Activated CD4-positive, alpha-beta T cell treated with anti-CD3 and anti-CD28 coated beads, Interleukin-2, amount 10 ng/mL, durations not matched to agents 7 days and 5 days (primary cell): ENCODE measurements at regions of chr19 and their contacts with region 1.

Region 1: GRCh38 chr19:1445185-1445931 is 4.6 kb upstream of the APC2 start:
- DNase-seq: peak; percentile 76
- H3K4me3 Mint-ChIP-seq: peak overlapping the region; percentile 65
- H3K27ac Mint-ChIP-seq: peak overlapping the region; percentile 62
- H3K4me1 Mint-ChIP-seq: peaks cover 37% of the 10 kb centered on the region
- H3K27me3 Mint-ChIP-seq: peaks cover 26% of the 10 kb centered on the region

Region 2: GRCh38 chr19:1223018-1223855 is 222.1 kb before region 1 on chr19:
- CTCF ChIA-PET with region 1: no interaction called
- POLR2A ChIA-PET with region 1: no interaction called
- DNase-seq: peak; percentile 41
- H3K4me3 Mint-ChIP-seq: no peak overlapping the region
- H3K27ac Mint-ChIP-seq: no peak overlapping the region
- H3K4me1 Mint-ChIP-seq: no peaks in the 10 kb centered on the region
- H3K27me3 Mint-ChIP-seq: no peaks in the 10 kb centered on the region

Region 3: GRCh38 chr19:1373534-1374249 is 71.7 kb before region 1 on chr19:
- CTCF ChIA-PET with region 1: no interaction called
- POLR2A ChIA-PET with region 1: no interaction called
- DNase-seq: no peak
- H3K4me3 Mint-ChIP-seq: no peak overlapping the region
- H3K27ac Mint-ChIP-seq: no peak overlapping the region
- H3K4me1 Mint-ChIP-seq: no peaks in the 10 kb centered on the region
- H3K27me3 Mint-ChIP-seq: no peaks in the 10 kb centered on the region

Region 4: DNA sequence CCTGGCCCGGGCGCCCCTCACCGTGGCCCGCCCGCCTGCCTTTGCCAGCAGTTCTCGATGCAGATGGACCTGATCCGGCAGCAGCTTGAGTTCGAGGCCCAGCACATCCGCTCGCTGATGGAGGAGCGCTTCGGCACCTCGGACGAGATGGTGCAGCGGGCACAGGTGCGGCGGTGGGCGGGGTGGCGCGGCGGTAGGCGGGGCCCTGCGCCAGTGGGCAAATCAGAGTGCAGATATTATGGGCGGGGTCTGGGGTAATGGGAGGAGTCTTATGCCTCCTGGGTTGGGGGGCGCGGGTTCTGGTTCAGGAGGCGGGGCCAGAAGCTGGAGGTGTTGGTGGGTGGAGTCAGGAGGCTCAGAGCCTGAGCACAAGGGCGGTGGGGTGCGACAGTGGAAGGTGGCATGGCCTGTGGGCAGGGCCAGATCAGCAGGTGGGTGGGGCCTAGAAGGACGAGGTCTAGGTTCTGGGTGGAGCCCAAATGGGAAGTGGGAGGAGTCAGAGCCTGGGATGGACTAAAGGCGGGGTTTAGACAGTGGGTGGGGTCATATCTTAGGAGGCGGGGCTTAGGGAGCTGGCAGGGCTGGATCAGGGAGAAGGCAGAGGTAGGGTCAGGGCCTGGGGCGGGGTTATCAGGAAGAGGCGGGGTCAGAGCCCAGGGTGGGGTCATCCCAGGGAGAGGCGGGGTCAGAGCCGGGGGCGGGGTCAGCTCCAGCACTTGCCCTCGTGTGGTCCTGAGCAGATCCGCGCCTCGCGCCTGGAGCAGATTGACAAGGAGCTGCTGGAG is 10.2 kb after region 1 on chr19:
- CTCF ChIA-PET with region 1: interaction called, 20 read pairs
- POLR2A ChIA-PET with region 1: no interaction called
- DNase-seq: peak; percentile 63
- H3K4me3 Mint-ChIP-seq: no peak overlapping the region
- H3K27ac Mint-ChIP-seq: no peak overlapping the region
- H3K4me1 Mint-ChIP-seq: peaks cover 11% of the 10 kb centered on the region
- H3K27me3 Mint-ChIP-seq: peaks cover 46% of the 10 kb centered on the region

Region 5: GRCh38 chr19:1538978-1539377 is 93.6 kb after region 1 on chr19:
- CTCF ChIA-PET with region 1: no interaction called
- POLR2A ChIA-PET with region 1: no interaction called
- DNase-seq: no peak
- H3K4me3 Mint-ChIP-seq: no peak overlapping the region
- H3K27ac Mint-ChIP-seq: no peak overlapping the region
- H3K4me1 Mint-ChIP-seq: no peaks in the 10 kb centered on the region
- H3K27me3 Mint-ChIP-seq: peaks cover 11% of the 10 kb centered on the region